Common myeloid progenitor, CD34-positive (primary cell): ENCODE measurements at regions of chr2 and their contacts with region 1.

Region 1: DNA sequence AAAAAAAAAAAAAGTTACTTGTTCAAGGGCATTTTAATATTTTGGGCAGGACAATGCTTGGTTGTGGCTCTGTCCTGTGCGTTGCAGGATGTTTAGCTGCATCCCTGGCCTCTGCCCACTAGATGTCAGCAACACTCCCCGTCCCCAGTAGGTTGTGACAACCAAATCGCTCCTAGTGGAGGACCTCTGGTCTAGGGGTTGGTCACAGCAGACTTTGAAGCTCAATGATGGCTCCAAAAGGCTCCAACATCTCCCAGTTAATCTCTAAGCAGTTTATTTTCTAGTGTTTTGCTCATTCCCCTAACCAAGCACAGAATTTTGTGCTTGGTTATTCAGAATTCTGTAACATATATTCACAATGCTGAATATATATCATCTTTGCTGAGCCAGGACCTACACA is 67.0 kb downstream of the CHRNA1 start:
- DNase-seq: peak; percentile 70 to 82 (median 80)
- H3K4me3 ChIP-seq: no peak overlapping the region
- H3K27ac ChIP-seq: no peak overlapping the region
- H3K4me1 ChIP-seq: no peaks in the 10 kb centered on the region
- H3K27me3 ChIP-seq: peaks cover 0 to 47% (median 16%) of the 10 kb centered on the region in 5 experiments

Region 2: GRCh38 chr2:174577967-174578589 is 119.2 kb before region 1 on chr2:
- CTCF ChIA-PET with region 1: interaction called, 450 read pairs
- POLR2A ChIA-PET with region 1: no interaction called
- DNase-seq: peak; percentile 77 to 89 (median 86)
- H3K4me3 ChIP-seq: no peak overlapping the region
- H3K27ac ChIP-seq: no peak overlapping the region
- H3K4me1 ChIP-seq: peaks cover 0 to 31% (median 7%) of the 10 kb centered on the region in 4 experiments
- H3K27me3 ChIP-seq: no peaks in the 10 kb centered on the region

Region 3: DNA sequence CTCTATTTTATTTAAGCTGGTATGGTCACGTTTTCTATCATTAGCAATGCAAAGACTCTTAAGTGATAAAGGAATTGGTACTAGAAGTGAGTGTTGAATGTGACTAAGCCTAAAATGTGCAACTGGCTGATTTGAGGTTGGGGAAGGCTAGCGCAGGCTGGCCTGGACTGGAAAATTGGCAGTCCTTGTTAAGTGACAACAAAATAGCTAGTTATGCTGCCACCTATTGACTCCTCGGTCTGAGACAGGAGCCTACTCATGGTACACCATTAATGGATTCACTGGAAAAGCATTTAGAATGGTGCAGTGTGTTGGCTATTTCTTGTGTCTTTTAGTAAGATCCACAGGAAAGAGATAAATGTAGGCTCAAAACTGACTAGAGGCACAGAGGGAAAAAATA is 94.0 kb before region 1 on chr2:
- CTCF ChIA-PET with region 1: interaction called, 401 read pairs
- POLR2A ChIA-PET with region 1: no interaction called
- DNase-seq: peak; percentile 79 to 88 (median 84)
- H3K4me3 ChIP-seq: no peak overlapping the region
- H3K27ac ChIP-seq: no peak overlapping the region
- H3K4me1 ChIP-seq: peaks cover 7 to 38% (median 24%) of the 10 kb centered on the region in 4 experiments
- H3K27me3 ChIP-seq: no peaks in the 10 kb centered on the region

Region 4: DNA sequence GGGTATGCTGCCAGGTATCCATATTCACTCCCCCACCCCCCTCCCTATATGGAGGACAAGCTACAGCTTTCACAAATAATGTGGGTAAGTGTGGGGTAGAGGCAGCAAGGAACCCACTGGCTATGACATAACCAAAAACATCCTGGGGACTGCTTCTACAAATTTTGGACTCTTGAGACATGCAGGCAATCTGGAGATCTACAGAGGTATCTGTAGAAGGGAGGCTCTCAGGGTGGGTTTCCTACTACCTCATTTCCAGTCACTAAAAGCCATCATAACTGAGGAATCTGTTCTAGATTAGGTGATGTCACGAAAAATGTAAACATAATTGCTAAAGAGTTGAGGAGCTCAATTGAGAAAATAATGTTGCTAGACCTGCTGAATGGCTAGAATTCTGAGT is 52.9 kb before region 1 on chr2:
- CTCF ChIA-PET with region 1: no interaction called
- POLR2A ChIA-PET with region 1: no interaction called
- DNase-seq: no peak
- H3K4me3 ChIP-seq: no peak overlapping the region
- H3K27ac ChIP-seq: no peak overlapping the region
- H3K4me1 ChIP-seq: no peaks in the 10 kb centered on the region
- H3K27me3 ChIP-seq: no peaks in the 10 kb centered on the region

Region 5: GRCh38 chr2:174682578-174683391 is 14.5 kb before region 1 on chr2:
- CTCF ChIA-PET with region 1: interaction called, 107 read pairs
- POLR2A ChIA-PET with region 1: no interaction called
- DNase-seq: peak; percentile 25 to 65 (median 51)
- H3K4me3 ChIP-seq: peak overlapping the region; percentile 66 to 88 (median 81)
- H3K27ac ChIP-seq: peak overlapping the region in 1 of 2 experiments; percentile 49
- H3K4me1 ChIP-seq: peaks cover 0 to 28% (median 14%) of the 10 kb centered on the region in 4 experiments
- H3K27me3 ChIP-seq: no peaks in the 10 kb centered on the region

Region 6: DNA sequence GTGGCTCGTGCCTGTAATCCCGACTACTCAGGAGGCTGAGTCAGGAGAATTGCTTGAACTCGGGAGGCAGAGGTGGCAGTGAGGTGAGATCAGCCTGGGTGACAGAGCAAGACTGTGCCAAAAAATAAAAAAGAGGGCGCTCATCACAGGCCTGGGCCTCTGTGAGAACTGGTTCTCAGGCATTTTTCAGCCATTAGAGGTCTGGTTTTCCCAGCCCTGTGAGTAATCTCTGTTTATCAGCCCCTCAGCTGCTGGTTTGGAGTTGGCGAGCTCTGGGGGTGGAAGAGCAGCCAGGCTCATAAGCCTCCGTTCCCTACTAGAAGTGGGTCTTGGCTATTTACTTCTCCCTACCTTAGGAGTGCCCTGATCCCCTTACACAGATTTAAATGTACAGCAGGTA is 14.0 kb after region 1 on chr2:
- CTCF ChIA-PET with region 1: interaction called, 35 read pairs
- POLR2A ChIA-PET with region 1: no interaction called
- DNase-seq: no peak
- H3K4me3 ChIP-seq: no peak overlapping the region
- H3K27ac ChIP-seq: no peak overlapping the region
- H3K4me1 ChIP-seq: no peaks in the 10 kb centered on the region
- H3K27me3 ChIP-seq: peaks cover 0 to 95% (median 44%) of the 10 kb centered on the region in 5 experiments

Region 7: GRCh38 chr2:174722942-174723592 is 25.8 kb after region 1 on chr2:
- CTCF ChIA-PET with region 1: interaction called, 13 read pairs
- POLR2A ChIA-PET with region 1: no interaction called
- DNase-seq: peak; percentile 34 to 75 (median 70)
- H3K4me3 ChIP-seq: no peak overlapping the region
- H3K27ac ChIP-seq: no peak overlapping the region
- H3K4me1 ChIP-seq: peaks cover 0 to 9% (median 2%) of the 10 kb centered on the region in 4 experiments
- H3K27me3 ChIP-seq: peaks cover 2 to 80% (median 38%) of the 10 kb centered on the region in 5 experiments

Region 8: DNA sequence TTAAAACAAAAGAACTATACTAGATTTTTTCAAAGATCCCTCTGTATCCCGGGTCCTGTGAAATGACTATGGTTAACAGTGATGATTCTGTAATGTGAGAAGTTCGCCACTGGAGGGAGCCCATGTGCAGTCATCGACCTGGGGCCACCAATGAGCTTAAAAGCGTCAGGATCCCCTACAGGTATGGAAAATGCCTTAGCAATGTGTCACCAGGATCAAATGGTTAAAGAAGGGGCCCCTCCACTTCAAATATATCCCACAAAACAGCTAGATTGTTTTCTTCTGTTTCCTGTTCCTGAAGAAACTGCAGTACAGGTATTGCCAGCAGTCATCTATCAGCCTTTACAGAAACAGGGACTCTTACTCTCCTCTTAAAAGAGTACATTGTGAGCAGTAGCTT is 51.7 kb after region 1 on chr2:
- CTCF ChIA-PET with region 1: interaction called, 53 read pairs
- POLR2A ChIA-PET with region 1: no interaction called
- DNase-seq: peak; percentile 54 to 70 (median 63)
- H3K4me3 ChIP-seq: no peak overlapping the region
- H3K27ac ChIP-seq: no peak overlapping the region
- H3K4me1 ChIP-seq: peaks cover 0 to 2% (median 0%) of the 10 kb centered on the region in 4 experiments
- H3K27me3 ChIP-seq: peaks cover 2 to 47% (median 16%) of the 10 kb centered on the region in 5 experiments